Activated CD4-positive, alpha-beta T cell treated with anti-CD3 and anti-CD28 coated beads for 36 hours (primary cell): ENCODE measurements at regions of chr14 and their contacts with region 1.

Region 1: DNA sequence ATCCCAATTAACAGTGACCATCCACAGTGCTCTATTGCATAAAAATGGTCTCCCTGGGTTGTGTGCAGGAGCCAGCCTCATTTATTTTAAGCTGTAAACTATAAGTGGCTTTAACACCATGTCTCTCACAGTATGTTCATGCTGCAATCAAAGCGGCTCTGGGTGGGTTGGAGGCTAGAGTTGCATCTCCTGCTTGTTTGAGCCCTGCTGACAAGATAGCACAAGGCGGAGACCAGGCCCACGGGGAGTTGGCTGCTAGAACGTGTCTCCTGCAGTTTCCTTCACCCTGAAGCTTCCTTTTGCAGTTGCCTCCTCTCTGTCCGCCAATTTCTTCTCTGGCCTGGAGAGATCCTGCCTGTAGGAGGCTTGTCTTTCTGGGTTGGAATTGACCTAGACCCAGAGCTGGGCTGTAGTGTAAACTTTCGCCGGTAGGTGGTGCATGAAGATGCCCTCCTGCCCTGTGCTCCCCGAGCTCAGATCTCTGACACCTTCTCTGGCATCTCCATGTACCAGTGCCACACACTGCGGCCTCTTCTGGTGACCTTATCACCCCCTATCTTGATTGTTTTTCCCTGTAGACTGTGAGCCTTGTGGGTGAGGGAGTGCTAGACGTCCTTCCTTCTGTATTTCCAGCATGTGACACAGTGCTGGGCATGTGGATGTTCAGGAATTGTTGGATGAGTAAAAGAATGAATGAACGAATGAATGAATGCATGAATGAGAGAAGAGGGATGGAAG is 10.3 kb downstream of the OTUB2 start:
- DNase-seq: peak; percentile 89
- ATAC-seq: peak; percentile 100
- H3K4me3 Mint-ChIP-seq: no peak overlapping the region
- H3K27ac Mint-ChIP-seq: no peak overlapping the region
- H3K4me1 Mint-ChIP-seq: peaks cover 3% of the 10 kb centered on the region
- H3K27me3 Mint-ChIP-seq: no peaks in the 10 kb centered on the region

Region 2: GRCh38 chr14:94021001-94021400 is 15.5 kb before region 1 on chr14:
- CTCF ChIA-PET with region 1: interaction called, 23 read pairs
- POLR2A ChIA-PET with region 1: no interaction called
- intact Hi-C with region 1: no loop called
- DNase-seq: no peak
- ATAC-seq: peak; percentile 62
- H3K4me3 Mint-ChIP-seq: no peak overlapping the region
- H3K27ac Mint-ChIP-seq: no peak overlapping the region
- H3K4me1 Mint-ChIP-seq: peaks cover 28% of the 10 kb centered on the region
- H3K27me3 Mint-ChIP-seq: no peaks in the 10 kb centered on the region

Region 3: DNA sequence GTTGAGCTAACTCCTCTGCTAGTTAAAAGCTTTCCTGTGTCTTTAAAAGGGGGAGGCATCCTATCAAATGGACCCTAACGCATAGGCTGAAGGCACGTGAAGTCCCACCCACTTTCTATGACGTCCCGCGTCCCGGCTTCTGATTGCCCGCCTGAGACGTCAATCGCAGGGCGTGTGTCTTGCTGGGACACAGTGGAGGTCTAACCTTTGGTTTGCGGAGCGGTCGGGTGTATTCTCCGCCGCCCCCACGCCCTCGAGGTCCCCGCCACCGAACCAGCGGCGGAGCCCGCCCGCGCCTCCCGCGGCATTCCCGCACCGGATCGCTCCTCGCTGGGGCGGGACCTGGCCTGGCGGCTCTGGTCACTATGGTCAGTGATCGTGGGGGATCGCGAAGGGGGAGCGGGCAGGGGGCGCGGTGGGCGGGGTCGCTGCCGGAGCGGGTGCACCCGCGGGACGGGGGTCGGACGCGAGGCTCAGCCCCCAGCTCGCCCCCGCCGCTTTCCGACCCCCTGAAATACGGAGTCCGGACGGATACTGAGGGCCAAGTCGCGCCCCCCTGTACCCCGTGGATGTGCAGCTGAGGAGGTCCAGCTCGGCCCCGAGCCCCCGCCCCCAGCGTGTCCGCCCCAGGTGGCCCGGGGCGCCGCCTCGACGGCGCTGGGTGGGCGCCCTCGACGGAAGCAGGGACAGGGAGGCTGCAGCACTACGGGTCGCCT is 10.2 kb before region 1 on chr14 and contains the start of gene OTUB2:
- CTCF ChIA-PET with region 1: interaction called, 25 read pairs
- POLR2A ChIA-PET with region 1: no interaction called
- intact Hi-C with region 1: no loop called
- DNase-seq: peak; percentile 98
- ATAC-seq: peak; percentile 99
- H3K4me3 Mint-ChIP-seq: peak within 1 kb of the TSS; percentile 54
- H3K27ac Mint-ChIP-seq: no peak within 1 kb of the TSS
- H3K4me1 Mint-ChIP-seq: peaks cover 32% of the 10 kb centered on the region
- H3K27me3 Mint-ChIP-seq: no peaks in the 10 kb centered on the region
- total RNA-seq, gene OTUB2: 0.75 to 0.93 TPM

Region 4: DNA sequence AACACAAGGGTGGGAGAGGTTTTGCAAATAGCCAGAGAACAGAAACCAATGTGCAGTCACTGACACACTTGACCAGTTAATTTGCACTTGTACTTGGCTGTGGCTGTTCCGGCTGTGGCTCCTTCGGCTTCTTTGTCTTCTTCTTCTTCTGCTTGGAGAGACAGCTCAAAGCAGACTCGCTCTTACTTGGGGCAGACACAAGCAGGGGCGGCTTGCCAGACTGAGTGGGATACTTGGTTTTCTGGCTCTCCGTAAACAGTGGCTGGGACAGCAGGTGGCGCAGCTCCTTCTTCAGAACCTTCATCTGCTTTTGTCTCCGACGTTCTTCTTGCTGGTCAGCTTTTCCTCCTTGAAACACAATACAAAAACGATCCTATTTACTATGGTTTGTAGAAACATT is 14.6 kb after region 1 on chr14:
- CTCF ChIA-PET with region 1: interaction called, 23 read pairs
- POLR2A ChIA-PET with region 1: interaction called, 5 read pairs
- intact Hi-C with region 1: no loop called
- DNase-seq: no peak
- ATAC-seq: no peak
- H3K4me3 Mint-ChIP-seq: no peak overlapping the region
- H3K27ac Mint-ChIP-seq: no peak overlapping the region
- H3K4me1 Mint-ChIP-seq: peaks cover 12% of the 10 kb centered on the region
- H3K27me3 Mint-ChIP-seq: no peaks in the 10 kb centered on the region

Region 5: GRCh38 chr14:94180655-94181271 is 144.3 kb after region 1 on chr14:
- CTCF ChIA-PET with region 1: interaction called, 12 read pairs
- POLR2A ChIA-PET with region 1: no interaction called
- intact Hi-C with region 1: loop called (anchors 1 kb)
- DNase-seq: peak; percentile 34
- ATAC-seq: peak; percentile 77
- H3K4me3 Mint-ChIP-seq: peak overlapping the region; percentile 81
- H3K27ac Mint-ChIP-seq: peak overlapping the region; percentile 55
- H3K4me1 Mint-ChIP-seq: peaks cover 52% of the 10 kb centered on the region
- H3K27me3 Mint-ChIP-seq: peaks cover 2% of the 10 kb centered on the region

Region 6: GRCh38 chr14:94307410-94307992 is 271.0 kb after region 1 on chr14:
- CTCF ChIA-PET with region 1: no interaction called
- POLR2A ChIA-PET with region 1: no interaction called
- intact Hi-C with region 1: loop called in 1 of 2 experiments (anchors 1 kb)
- DNase-seq: no peak
- ATAC-seq: no peak
- H3K4me3 Mint-ChIP-seq: no peak overlapping the region
- H3K27ac Mint-ChIP-seq: no peak overlapping the region
- H3K4me1 Mint-ChIP-seq: no peaks in the 10 kb centered on the region
- H3K27me3 Mint-ChIP-seq: peaks cover 5% of the 10 kb centered on the region